Activated B cell treated with CpG ODN at 0.5 μM for 24 hours (primary cell): ENCODE measurements at regions of chr3 and their contacts with region 1.

Region 1: GRCh38 chr3:196932600-196932999 is 9.7 kb downstream of the NCBP2 start:
- DNase-seq: no peak
- ATAC-seq: peak; percentile 77
- H3K4me3 Mint-ChIP-seq: peak overlapping the region; percentile 44
- H3K27ac Mint-ChIP-seq: peak overlapping the region; percentile 82
- H3K4me1 Mint-ChIP-seq: peaks cover 35% of the 10 kb centered on the region
- H3K27me3 Mint-ChIP-seq: no peaks in the 10 kb centered on the region
- CTCF ChIP-seq: no peak

Region 2: GRCh38 chr3:196920733-196921132 is 11.9 kb before region 1 on chr3:
- CTCF ChIA-PET with region 1: no interaction called
- POLR2A ChIA-PET with region 1: no interaction called
- intact Hi-C with region 1: loop called (anchors 1 kb)
- DNase-seq: no peak
- ATAC-seq: peak; percentile 82
- H3K4me3 Mint-ChIP-seq: no peak overlapping the region
- H3K27ac Mint-ChIP-seq: peak overlapping the region; percentile 57
- H3K4me1 Mint-ChIP-seq: peaks cover 14% of the 10 kb centered on the region
- H3K27me3 Mint-ChIP-seq: no peaks in the 10 kb centered on the region
- CTCF ChIP-seq: no peak

Region 3: GRCh38 chr3:197430934-197431333 is 498.3 kb after region 1 on chr3:
- CTCF ChIA-PET with region 1: no interaction called
- POLR2A ChIA-PET with region 1: no interaction called
- intact Hi-C with region 1: no loop called
- DNase-seq: no peak
- ATAC-seq: no peak
- H3K4me3 Mint-ChIP-seq: no peak overlapping the region
- H3K27ac Mint-ChIP-seq: no peak overlapping the region
- H3K4me1 Mint-ChIP-seq: peaks cover 8% of the 10 kb centered on the region
- H3K27me3 Mint-ChIP-seq: peaks cover 21% of the 10 kb centered on the region
- CTCF ChIP-seq: no peak